T-cell (primary cell): ENCODE measurements at regions of chr17 and their contacts with region 1.

Region 1: DNA sequence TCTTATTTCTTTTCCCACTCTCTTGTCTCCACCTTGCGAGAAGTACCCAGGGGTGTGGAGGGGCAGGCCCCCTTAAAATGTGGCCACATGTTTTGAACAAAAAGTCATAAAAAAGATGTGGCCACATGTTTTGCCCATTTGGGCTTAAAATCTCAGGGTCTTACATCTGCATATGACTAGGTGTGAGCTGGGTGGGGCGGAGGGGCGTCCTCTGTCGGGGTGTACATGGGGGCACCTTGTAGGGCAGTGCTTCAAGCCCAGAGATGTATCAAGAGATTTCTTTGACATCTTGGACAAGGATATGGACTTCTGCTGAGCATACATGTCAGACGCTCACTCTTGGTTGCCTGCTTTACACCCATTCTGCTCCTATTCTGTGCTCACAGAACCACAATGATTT is 13.0 kb upstream of the SLC47A1 start:
- DNase-seq: no peak
- ATAC-seq: no peak
- H3K4me3 ChIP-seq: no peak overlapping the region
- H3K4me3 Mint-ChIP-seq: no peak overlapping the region
- H3K27ac ChIP-seq: no peak overlapping the region
- H3K27ac Mint-ChIP-seq: no peak overlapping the region
- H3K4me1 ChIP-seq: peaks cover 0 to 3% of the 10 kb centered on the region in 2 experiments
- H3K4me1 Mint-ChIP-seq: peaks cover 0 to 14% (median 1%) of the 10 kb centered on the region in 3 donors
- H3K27me3 ChIP-seq: peaks cover 0 to 4% of the 10 kb centered on the region in 2 experiments
- H3K27me3 Mint-ChIP-seq: peaks cover 4 to 7% of the 10 kb centered on the region in 2 donors

Region 2: DNA sequence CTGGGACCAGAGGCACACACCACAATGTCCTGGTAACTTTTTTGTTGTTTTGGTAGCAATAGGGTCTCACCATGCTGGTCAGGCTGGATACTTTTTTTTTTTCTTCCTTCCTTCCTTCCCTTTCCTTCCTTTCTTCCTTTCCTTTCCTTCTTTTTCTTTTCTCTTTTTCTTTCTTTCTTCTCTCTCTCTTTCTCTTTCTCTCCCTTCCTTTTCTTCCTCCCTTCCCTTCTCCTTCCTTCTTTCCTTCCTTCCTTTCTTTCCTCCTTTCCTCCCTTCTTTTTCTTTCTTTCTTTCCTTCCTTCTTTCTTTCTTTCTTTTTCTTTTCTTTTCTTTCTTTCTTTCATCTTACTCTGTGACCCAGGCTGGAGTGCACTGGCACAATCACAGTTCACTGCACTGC is 365.5 kb after region 1 on chr17:
- CTCF ChIA-PET with region 1: interaction called in 1 of 2 experiments, 11 read pairs
- POLR2A ChIA-PET with region 1: no interaction called
- DNase-seq: no peak
- ATAC-seq: no peak
- H3K4me3 ChIP-seq: no peak overlapping the region
- H3K4me3 Mint-ChIP-seq: no peak overlapping the region
- H3K27ac ChIP-seq: no peak overlapping the region
- H3K27ac Mint-ChIP-seq: no peak overlapping the region
- H3K4me1 ChIP-seq: no peaks in the 10 kb centered on the region
- H3K4me1 Mint-ChIP-seq: peaks cover 0 to 6% (median 0%) of the 10 kb centered on the region in 3 donors
- H3K27me3 ChIP-seq: peaks cover 0 to 2% of the 10 kb centered on the region in 2 experiments
- H3K27me3 Mint-ChIP-seq: no peaks in the 10 kb centered on the region